ENCODE measurements at regions of chr17 and their contacts with region 1.

Region 1: DNA sequence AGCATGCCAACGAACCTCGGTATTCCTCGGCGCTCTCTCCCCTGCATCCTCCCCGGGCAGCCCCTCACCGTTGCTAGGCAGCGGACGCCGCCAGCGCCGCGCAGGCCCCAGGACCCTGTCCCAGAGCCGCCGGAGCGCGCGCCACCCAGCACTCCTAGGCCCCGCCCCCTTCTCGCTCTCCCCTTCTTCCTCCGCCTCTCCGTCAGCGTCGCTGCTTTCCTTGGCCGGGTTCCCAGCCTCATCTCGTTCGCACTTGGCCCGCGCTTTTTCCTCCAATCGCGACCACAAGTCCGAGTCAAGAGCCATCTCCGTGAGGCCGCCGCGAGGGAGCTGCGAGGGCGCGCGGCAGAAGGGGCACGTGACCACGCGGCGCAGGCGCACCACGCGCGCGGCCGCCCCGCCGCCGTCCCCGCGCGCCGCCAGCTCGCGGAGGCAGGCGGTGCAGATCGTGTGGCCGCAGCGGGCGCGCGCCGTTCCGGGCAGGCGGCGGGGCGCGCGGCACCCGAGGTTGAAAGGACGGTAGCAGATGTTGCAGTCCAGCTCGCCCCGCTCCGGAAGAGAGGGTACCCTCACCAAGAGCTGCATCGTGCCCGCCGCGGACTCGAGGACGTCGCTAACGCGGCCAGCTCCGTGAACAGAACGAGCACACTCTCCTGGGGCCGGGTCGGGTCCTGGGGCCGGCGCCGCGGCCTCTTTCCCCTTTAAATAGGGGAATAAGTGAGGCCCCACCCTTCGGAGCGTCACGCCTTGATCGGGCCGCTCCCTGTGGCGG is at the start of gene RNF227:
- DNase-seq: peak; percentile 60 to 95
- H3K4me3 ChIP-seq: peak within 1 kb of the TSS; percentile 53 to 65
- H3K27ac ChIP-seq: peak within 1 kb of the TSS; percentile 92 to 97
- H3K4me1 ChIP-seq: peaks cover 6 to 11% of the 10 kb centered on the region in 2 donors
- H3K27me3 ChIP-seq: no peaks in the 10 kb centered on the region
- CTCF ChIP-seq: no peak
- total RNA-seq, gene RNF227: 0.32 TPM

Region 2: GRCh38 chr17:7856883-7857723 is 58.7 kb before region 1 on chr17 and contains the start of gene NAA38:
- intact Hi-C with region 1: loop called (anchors 2 kb)
- DNase-seq: peak; percentile 92 to 99
- H3K4me3 ChIP-seq: peak within 1 kb of the TSS; percentile 73 to 76
- H3K27ac ChIP-seq: peak within 1 kb of the TSS; percentile 87 to 88
- H3K4me1 ChIP-seq: peaks cover 9 to 25% of the 10 kb centered on the region in 2 donors
- H3K27me3 ChIP-seq: no peaks in the 10 kb centered on the region
- CTCF ChIP-seq: peak; percentile 39 to 55 (median 51)
- total RNA-seq, gene NAA38: 59.0 TPM

Region 3: GRCh38 chr17:7887482-7888183 is 28.2 kb before region 1 on chr17:
- intact Hi-C with region 1: loop called (anchors 2 kb)
- DNase-seq: peak; percentile 65 to 95
- H3K4me3 ChIP-seq: peak overlapping the region; percentile 77 to 95
- H3K27ac ChIP-seq: peak overlapping the region; percentile 90 to 91
- H3K4me1 ChIP-seq: peaks cover 19 to 28% of the 10 kb centered on the region in 2 donors
- H3K27me3 ChIP-seq: no peaks in the 10 kb centered on the region
- CTCF ChIP-seq: no peak

Region 4: GRCh38 chr17:7931709-7932482 is 16.1 kb after region 1 on chr17 and contains the starts of genes CNTROB and TRAPPC1:
- intact Hi-C with region 1: loop called (anchors 1 kb)
- DNase-seq: peak; percentile 100
- H3K4me3 ChIP-seq: peak within 1 kb of the TSS; percentile 76 to 84
- H3K27ac ChIP-seq: peak within 1 kb of the TSS; percentile 27 to 57
- H3K4me1 ChIP-seq: peaks cover 12 to 18% of the 10 kb centered on the region in 2 donors
- H3K27me3 ChIP-seq: no peaks in the 10 kb centered on the region
- CTCF ChIP-seq: no peak
- total RNA-seq, gene CNTROB: 13.7 TPM
- total RNA-seq, gene TRAPPC1: 36.0 TPM

Region 5: GRCh38 chr17:7989781-7990655 is 74.2 kb after region 1 on chr17:
- intact Hi-C with region 1: loop called (anchors 1 kb)
- DNase-seq: peak; percentile 41 to 90
- H3K4me3 ChIP-seq: peak overlapping the region; percentile 60 to 79
- H3K27ac ChIP-seq: peak overlapping the region in 1 of 2 donors; percentile 34
- H3K4me1 ChIP-seq: no peaks in the 10 kb centered on the region
- H3K27me3 ChIP-seq: no peaks in the 10 kb centered on the region
- CTCF ChIP-seq: peak; percentile 91 to 98 (median 96)

Region 6: GRCh38 chr17:8057691-8058114 is 141.9 kb after region 1 on chr17:
- intact Hi-C with region 1: loop called (anchors 5 kb)
- DNase-seq: peak in 1 of 2 donors; percentile 74
- H3K4me3 ChIP-seq: no peak overlapping the region
- H3K27ac ChIP-seq: no peak overlapping the region
- H3K4me1 ChIP-seq: peaks cover 0 to 3% of the 10 kb centered on the region in 2 donors
- H3K27me3 ChIP-seq: peaks cover 8% of the 10 kb centered on the region
- CTCF ChIP-seq: peak; percentile 69 to 78 (median 74)

Region 7: GRCh38 chr17:8072729-8073461 is 157.1 kb after region 1 on chr17:
- intact Hi-C with region 1: no loop called
- DNase-seq: no peak
- H3K4me3 ChIP-seq: peak overlapping the region in 1 of 2 donors; percentile 34
- H3K27ac ChIP-seq: no peak overlapping the region
- H3K4me1 ChIP-seq: peaks cover 7 to 11% of the 10 kb centered on the region in 2 donors
- H3K27me3 ChIP-seq: peaks cover 7% of the 10 kb centered on the region
- CTCF ChIP-seq: no peak

Measured in ascending aorta (tissue), 2 donors.